ENCODE measurements at regions of chr12 and their contacts with region 1.

Region 1: DNA sequence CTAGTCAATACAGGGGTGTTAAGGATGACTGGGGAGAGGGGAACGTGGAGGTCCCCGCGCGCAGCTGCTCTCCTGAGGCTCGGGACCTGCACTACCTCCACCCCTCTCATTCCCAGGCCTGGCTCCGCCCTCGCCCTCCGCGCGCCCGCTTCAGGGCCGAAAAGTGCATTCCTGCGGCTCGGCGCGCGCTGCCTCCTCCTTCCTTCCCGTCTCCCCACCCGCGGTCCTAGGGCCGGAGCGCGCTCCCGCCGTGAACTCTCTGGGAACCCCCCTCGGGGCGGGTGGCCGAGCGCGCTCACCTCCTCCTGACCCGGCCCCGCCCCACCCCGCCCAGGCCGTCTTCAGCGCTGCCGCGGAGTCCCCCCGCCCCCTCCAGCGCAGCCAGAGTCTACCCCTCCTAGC is 11.2 kb downstream of the RARG start:
- DNase-seq: peak; percentile 61 to 94
- H3K4me3 ChIP-seq: peak overlapping the region; percentile 85 to 90
- H3K27ac ChIP-seq: peak overlapping the region; percentile 92 to 96
- H3K4me1 ChIP-seq: peaks cover 35 to 56% of the 10 kb centered on the region in 2 donors
- H3K27me3 ChIP-seq: no peaks in the 10 kb centered on the region
- CTCF ChIP-seq: no peak

Region 2: DNA sequence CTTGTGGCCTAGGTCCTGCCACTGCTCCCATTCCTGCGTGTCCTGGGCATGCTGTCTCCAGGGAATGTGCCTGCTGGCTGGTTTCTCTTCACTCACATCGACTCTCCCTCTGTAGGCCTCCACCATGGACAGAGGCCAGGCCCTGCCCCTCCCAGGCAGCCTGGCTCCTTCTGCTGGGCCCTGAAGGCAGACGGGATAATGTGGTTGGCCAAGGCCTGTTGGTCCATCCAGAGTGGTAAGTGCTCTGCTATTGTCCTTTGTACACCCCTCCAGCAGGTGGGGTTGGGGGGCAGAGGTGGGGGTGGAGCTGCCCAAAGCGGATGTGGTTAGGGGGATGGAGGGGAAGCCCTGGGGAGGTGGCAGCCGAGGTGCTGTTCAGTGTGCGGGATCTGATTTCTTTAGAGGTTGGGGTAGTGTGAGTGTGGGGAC is 1179.1 kb before region 1 on chr12:
- intact Hi-C with region 1: loop called (anchors 10 kb)
- DNase-seq: peak in 1 of 2 donors; percentile 82
- H3K4me3 ChIP-seq: no peak overlapping the region
- H3K27ac ChIP-seq: peak overlapping the region; percentile 96 to 99
- H3K4me1 ChIP-seq: peaks cover 6 to 55% of the 10 kb centered on the region in 2 donors
- H3K27me3 ChIP-seq: no peaks in the 10 kb centered on the region
- CTCF ChIP-seq: no peak

Region 3: GRCh38 chr12:52715416-52715815 is 505.4 kb before region 1 on chr12:
- intact Hi-C with region 1: no loop called
- DNase-seq: no peak
- H3K4me3 ChIP-seq: no peak overlapping the region
- H3K27ac ChIP-seq: no peak overlapping the region
- H3K4me1 ChIP-seq: no peaks in the 10 kb centered on the region
- H3K27me3 ChIP-seq: peaks cover 9% of the 10 kb centered on the region
- CTCF ChIP-seq: no peak

Region 4: GRCh38 chr12:53231826-53232645 is 11.2 kb after region 1 on chr12 and contains the start of gene RARG:
- intact Hi-C with region 1: loop called (anchors 1 kb)
- DNase-seq: peak; percentile 39 to 87
- H3K4me3 ChIP-seq: peak within 1 kb of the TSS; percentile 58 to 70
- H3K27ac ChIP-seq: peak within 1 kb of the TSS; percentile 87 to 88
- H3K4me1 ChIP-seq: peaks cover 5 to 33% of the 10 kb centered on the region in 2 donors
- H3K27me3 ChIP-seq: no peaks in the 10 kb centered on the region
- CTCF ChIP-seq: no peak
- total RNA-seq, gene RARG: 29.8 TPM

Region 5: DNA sequence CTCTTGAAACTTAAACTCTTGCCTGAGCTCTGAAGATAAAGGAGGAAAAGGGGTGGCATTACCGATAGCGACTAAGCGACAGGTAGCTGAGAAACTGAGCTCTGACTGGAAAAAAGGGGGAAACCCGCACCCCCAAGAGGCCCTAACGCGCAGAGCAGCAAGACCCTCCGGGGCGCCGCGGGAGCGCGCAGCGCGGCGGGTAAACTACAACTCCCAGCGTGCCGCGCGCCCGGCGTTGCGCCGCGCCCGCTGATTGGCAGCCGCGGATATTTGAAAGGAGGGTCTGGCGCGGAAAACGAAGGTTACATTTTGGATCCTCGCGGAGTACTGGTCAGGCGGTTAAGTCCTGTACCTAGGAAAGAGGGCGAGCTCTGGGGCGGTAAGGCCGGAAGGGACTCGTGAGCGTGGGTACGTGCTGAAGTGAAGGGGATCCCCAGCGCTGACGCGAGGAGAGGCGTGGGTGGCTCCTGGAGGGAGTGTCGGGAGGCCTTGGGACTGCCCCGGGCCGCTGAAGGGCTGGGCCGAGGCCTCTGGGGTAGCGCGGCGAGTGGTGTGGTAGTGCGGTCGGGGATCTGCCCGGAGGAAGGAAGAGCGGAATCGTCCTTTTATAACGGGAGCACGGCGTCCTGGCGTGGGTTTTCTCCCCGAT is 47.3 kb after region 1 on chr12 and contains the start of gene ESPL1:
- intact Hi-C with region 1: loop called (anchors 2 kb)
- DNase-seq: peak; percentile 15 to 87
- H3K4me3 ChIP-seq: peak within 1 kb of the TSS; percentile 63 to 64
- H3K27ac ChIP-seq: no peak within 1 kb of the TSS
- H3K4me1 ChIP-seq: no peaks in the 10 kb centered on the region
- H3K27me3 ChIP-seq: no peaks in the 10 kb centered on the region
- CTCF ChIP-seq: peak in 2 of 3 experiments; percentile 22 to 26
- total RNA-seq, gene ESPL1: not detected

Region 6: DNA sequence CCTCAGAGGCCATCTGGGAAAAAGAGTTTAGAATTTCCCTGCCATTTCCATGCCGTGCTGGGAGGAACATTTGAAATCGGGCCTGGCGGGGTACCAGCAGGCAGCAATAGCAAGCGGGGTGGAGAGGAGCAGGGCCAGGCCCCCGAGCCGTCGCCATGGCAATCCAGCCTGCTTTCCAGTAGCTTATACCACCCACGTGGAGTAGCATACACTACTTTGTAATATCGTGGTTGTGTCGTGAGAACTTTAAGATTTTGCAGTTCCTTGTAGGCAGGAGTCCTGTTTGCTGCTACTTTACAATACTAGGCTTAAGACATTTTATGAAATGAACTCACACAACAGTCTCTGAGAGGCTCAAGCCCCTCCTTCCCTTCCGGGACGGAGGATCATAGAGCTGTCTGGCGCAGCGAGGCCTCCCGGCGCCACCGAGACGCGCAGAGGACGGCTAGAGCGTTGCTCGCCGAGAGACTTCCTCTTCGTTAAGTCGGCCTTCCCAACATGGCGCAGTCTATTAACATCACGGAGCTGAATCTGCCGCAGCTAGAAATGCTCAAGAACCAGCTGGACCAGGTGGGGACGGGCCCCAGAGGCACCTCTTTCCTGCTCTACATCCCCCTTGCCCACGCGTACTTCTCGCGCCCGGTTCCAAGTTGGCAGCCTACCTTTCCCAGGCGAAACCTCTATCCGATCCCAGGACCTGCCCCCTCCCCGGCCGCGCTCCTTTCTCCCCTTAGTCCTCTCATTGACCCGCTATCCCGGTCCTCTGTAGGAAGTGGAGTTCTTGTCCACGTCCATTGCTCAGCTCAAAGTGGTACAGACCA is 74.5 kb after region 1 on chr12 and contains the start of gene PFDN5:
- intact Hi-C with region 1: loop called (anchors 2 kb)
- DNase-seq: peak; percentile 49 to 94
- H3K4me3 ChIP-seq: peak within 1 kb of the TSS; percentile 56 to 90
- H3K27ac ChIP-seq: peak within 1 kb of the TSS; percentile 85 to 92
- H3K4me1 ChIP-seq: peaks cover 10 to 20% of the 10 kb centered on the region in 2 donors
- H3K27me3 ChIP-seq: no peaks in the 10 kb centered on the region
- CTCF ChIP-seq: no peak
- total RNA-seq, gene PFDN5: 187 TPM